ENCODE measurements at regions of chr10 and their contacts with region 1.

Region 1: GRCh38 chr10:27654284-27654683 is 91.3 kb downstream of the MKX start:
- DNase-seq: no peak
- H3K4me3 Mint-ChIP-seq: no peak overlapping the region
- H3K27ac Mint-ChIP-seq: no peak overlapping the region
- H3K4me1 Mint-ChIP-seq: no peaks in the 10 kb centered on the region
- H3K27me3 Mint-ChIP-seq: peaks cover 14% of the 10 kb centered on the region

Region 2: DNA sequence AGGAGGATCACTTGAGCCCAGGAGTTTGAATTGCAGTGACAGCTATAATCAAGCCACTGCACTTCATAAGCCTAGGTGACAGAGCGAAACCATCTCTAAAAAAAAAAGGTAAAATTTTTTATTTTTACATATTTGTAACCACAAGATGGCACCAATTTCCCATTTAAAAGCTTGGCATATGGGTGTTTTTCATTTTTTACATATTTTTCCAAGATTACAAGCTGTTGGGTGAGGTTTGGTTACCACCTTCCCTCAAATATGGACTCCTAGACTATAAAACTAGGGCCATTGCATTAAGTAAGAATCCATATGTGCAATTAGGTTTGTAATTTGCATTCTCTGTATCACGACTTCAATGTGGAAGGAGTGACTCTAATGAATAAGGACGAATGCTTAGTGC is 284.4 kb before region 1 on chr10:
- CTCF ChIA-PET with region 1: interaction called, 3 read pairs
- intact Hi-C with region 1: loop called (anchors 1 kb)
- DNase-seq: no peak
- H3K4me3 Mint-ChIP-seq: no peak overlapping the region
- H3K27ac Mint-ChIP-seq: no peak overlapping the region
- H3K4me1 Mint-ChIP-seq: peaks cover 12% of the 10 kb centered on the region
- H3K27me3 Mint-ChIP-seq: no peaks in the 10 kb centered on the region

Region 3: GRCh38 chr10:27745732-27746396 is 91.6 kb after region 1 on chr10 and contains the start of gene MKX:
- CTCF ChIA-PET with region 1: no interaction called
- intact Hi-C with region 1: no loop called
- DNase-seq: peak; percentile 60
- H3K4me3 Mint-ChIP-seq: peak within 1 kb of the TSS; percentile 68
- H3K27ac Mint-ChIP-seq: no peak within 1 kb of the TSS
- H3K4me1 Mint-ChIP-seq: peaks cover 28% of the 10 kb centered on the region
- H3K27me3 Mint-ChIP-seq: peaks cover 52% of the 10 kb centered on the region
- total RNA-seq, gene MKX: 0.15 to 0.38 TPM

Measured in activated naive CD4-positive, alpha-beta T cell treated with anti-CD3 and anti-CD28 coated beads for 36 hours (primary cell).